K562 (cell line): ENCODE measurements at regions of chr2 and their contacts with region 1.

Region 1: GRCh38 chr2:100407108-100407507 is 10.4 kb downstream of the CHST10 start:
- DNase-seq: no peak
- ATAC-seq: no peak
- H3K4me3 ChIP-seq: no peak overlapping the region
- H3K27ac ChIP-seq: no peak overlapping the region
- H3K4me1 ChIP-seq: peaks cover 0 to 4% of the 10 kb centered on the region in 2 experiments; a peak in 2 of 5 replicates
- H3K27me3 ChIP-seq: no peaks in the 10 kb centered on the region
- CTCF ChIP-seq: no peak
- EP300 ChIP-seq: no peak
- POLR2A ChIP-seq: no peak
- RAD21 ChIP-seq: no peak

Region 2: DNA sequence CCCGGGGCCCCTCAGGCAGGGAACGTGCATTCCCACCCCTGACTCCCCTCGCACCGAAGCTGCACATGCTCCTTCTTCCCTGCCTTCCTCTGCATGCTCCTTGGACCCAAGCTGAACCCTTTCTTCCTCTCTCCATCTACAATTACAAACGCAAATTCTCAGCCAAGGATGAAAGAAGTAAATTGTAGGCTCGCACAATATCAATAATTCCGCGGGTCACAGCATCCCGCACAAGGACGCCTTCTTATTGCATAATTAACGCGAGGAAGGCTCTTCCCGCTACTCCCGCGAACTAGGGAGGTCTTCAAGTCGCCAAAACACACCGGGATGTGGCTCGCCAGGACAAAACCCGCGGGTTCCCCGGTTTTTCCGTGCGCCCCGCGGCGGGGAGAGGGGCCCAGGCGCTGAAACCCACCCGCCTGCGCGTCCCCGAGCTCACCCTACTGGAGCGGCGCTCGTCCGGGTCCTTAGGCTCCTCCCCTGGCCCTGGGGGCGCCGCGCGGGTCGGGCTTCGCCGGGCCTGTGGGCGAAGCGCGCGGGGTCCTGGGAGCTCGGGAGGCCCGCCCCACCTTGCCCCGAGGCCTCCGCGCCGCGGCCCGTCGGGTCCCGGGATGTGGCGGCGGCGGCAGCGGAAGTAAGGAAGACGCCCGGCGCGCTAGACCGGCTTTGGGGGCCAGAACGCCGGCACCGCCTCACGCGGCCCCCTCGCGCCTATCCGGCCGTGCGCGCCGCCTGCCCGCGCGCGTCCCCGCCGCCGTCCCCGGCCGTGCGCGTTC is 10.0 kb after region 1 on chr2 and contains the start of gene CHST10:
- CTCF ChIA-PET with region 1: no interaction called
- POLR2A ChIA-PET with region 1: interaction called, 12 read pairs
- in situ Hi-C with region 1: no loop called
- intact Hi-C with region 1: no loop called
- DNase-seq: peak; percentile 78 to 92 (median 90)
- ATAC-seq: peak; percentile 98
- H3K4me3 ChIP-seq: peak within 1 kb of the TSS; percentile 77
- H3K27ac ChIP-seq: peak within 1 kb of the TSS; percentile 79
- H3K4me1 ChIP-seq: peaks cover 8 to 10% of the 10 kb centered on the region in 2 experiments; a peak in 3 of 5 replicates
- H3K27me3 ChIP-seq: no peaks in the 10 kb centered on the region
- CTCF ChIP-seq: no peak
- EP300 ChIP-seq: no peak
- POLR2A ChIP-seq: peak; percentile 72
- RAD21 ChIP-seq: no peak
- polyA plus RNA-seq, gene CHST10: 1.3 to 5.3 TPM

Region 3: DNA sequence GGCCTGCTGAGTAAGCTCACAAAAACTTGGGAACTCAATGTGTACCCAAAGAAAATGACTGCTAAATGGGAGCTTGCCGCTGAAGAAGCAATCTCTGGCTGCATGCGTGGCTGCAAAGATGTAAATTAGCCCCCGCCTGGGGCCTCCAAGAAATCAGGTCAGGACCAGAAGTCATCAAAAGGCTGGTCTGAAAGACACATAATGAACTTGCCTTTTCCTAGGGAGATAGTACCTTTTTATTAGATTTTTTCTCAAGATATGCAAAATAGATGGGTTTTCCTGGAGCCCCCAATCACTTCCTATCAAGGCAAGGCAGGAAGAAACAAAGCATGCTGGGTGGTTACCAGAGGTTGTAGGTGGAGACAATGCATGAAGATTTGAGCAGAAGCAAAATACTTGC is 194.6 kb after region 1 on chr2:
- CTCF ChIA-PET with region 1: no interaction called
- POLR2A ChIA-PET with region 1: no interaction called
- in situ Hi-C with region 1: no loop called
- intact Hi-C with region 1: no loop called
- DNase-seq: no peak
- ATAC-seq: no peak
- H3K4me3 ChIP-seq: no peak overlapping the region
- H3K27ac ChIP-seq: no peak overlapping the region
- H3K4me1 ChIP-seq: no peaks in the 10 kb centered on the region
- H3K27me3 ChIP-seq: peaks cover 16 to 28% of the 10 kb centered on the region in 2 experiments
- CTCF ChIP-seq: no peak
- EP300 ChIP-seq: no peak
- POLR2A ChIP-seq: no peak
- RAD21 ChIP-seq: no peak